ENCODE measurements at regions of chr7 and their contacts with region 1.

Region 1: DNA sequence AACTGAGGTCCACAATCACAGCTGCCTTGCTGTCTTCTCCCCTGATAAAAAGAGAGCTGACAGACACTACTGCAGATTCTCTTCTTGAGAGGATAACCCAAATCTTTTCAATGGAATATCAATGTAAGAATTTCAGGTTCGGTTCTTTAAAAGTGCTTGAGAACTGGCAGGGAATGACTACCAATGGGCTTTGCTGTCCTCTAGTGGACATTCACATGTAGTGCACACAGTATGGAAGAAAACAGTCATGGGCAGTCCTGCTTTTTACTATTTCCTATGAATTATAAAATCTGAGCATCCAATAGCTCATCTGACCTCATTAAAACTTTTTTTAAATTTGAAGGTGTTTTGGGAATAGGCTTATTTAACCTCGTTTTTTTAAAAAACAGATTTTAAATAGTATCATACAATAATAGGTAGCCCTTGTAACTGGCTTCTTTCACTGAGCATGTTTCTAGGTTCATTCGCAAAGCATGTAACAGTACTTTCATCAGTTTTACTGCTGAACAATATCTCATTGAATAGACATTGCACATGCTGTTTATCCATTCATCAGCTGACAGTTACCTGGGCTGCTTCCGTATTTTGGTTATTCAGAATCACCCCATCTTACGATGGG is 18.3 kb downstream of the FZD9 start:
- DNase-seq: peak in 19 of 42 donors; percentile 32 to 72 (median 45)

Region 2: GRCh38 chr7:73342645-73343044 is 109.2 kb before region 1 on chr7:
- intact Hi-C with region 1: loop called (anchors 5 kb)
- DNase-seq: peak in 10 of 42 donors; percentile 13 to 62 (median 26)

Measured in head of caudate nucleus (tissue), 42 donors.